B cell (primary cell): ENCODE measurements at regions of chr22 and their contacts with region 1.

Region 1: GRCh38 chr22:43587565-43587964 is 175.8 kb downstream of the MPPED1 start:
- DNase-seq: no peak
- ATAC-seq: no peak
- H3K4me3 ChIP-seq: no peak overlapping the region
- H3K4me3 Mint-ChIP-seq: no peak overlapping the region
- H3K27ac ChIP-seq: no peak overlapping the region
- H3K27ac Mint-ChIP-seq: no peak overlapping the region
- H3K4me1 ChIP-seq: no peaks in the 10 kb centered on the region
- H3K4me1 Mint-ChIP-seq: no peaks in the 10 kb centered on the region
- H3K27me3 ChIP-seq: no peaks in the 10 kb centered on the region
- H3K27me3 Mint-ChIP-seq: peaks cover 38% of the 10 kb centered on the region
- CTCF ChIP-seq: no peak

Region 2: GRCh38 chr22:43476341-43476740 is 111.2 kb before region 1 on chr22:
- CTCF ChIA-PET with region 1: no interaction called
- POLR2A ChIA-PET with region 1: no interaction called
- intact Hi-C with region 1: no loop called
- DNase-seq: no peak
- ATAC-seq: no peak
- H3K4me3 ChIP-seq: no peak overlapping the region
- H3K4me3 Mint-ChIP-seq: no peak overlapping the region
- H3K27ac ChIP-seq: no peak overlapping the region
- H3K27ac Mint-ChIP-seq: no peak overlapping the region
- H3K4me1 ChIP-seq: peaks cover 7 to 17% of the 10 kb centered on the region in 2 donors
- H3K4me1 Mint-ChIP-seq: peaks cover 17% of the 10 kb centered on the region
- H3K27me3 ChIP-seq: peaks cover 0 to 14% (median 1%) of the 10 kb centered on the region in 4 experiments
- H3K27me3 Mint-ChIP-seq: peaks cover 16% of the 10 kb centered on the region
- CTCF ChIP-seq: no peak

Region 3: GRCh38 chr22:43570531-43571165 is 16.9 kb before region 1 on chr22:
- CTCF ChIA-PET with region 1: no interaction called
- POLR2A ChIA-PET with region 1: no interaction called
- intact Hi-C with region 1: no loop called
- DNase-seq: no peak
- ATAC-seq: no peak
- H3K4me3 ChIP-seq: no peak overlapping the region
- H3K4me3 Mint-ChIP-seq: no peak overlapping the region
- H3K27ac ChIP-seq: no peak overlapping the region
- H3K27ac Mint-ChIP-seq: no peak overlapping the region
- H3K4me1 ChIP-seq: no peaks in the 10 kb centered on the region
- H3K4me1 Mint-ChIP-seq: no peaks in the 10 kb centered on the region
- H3K27me3 ChIP-seq: peaks cover 0 to 3% (median 0%) of the 10 kb centered on the region in 4 experiments
- H3K27me3 Mint-ChIP-seq: peaks cover 11% of the 10 kb centered on the region
- CTCF ChIP-seq: no peak

Region 4: GRCh38 chr22:43666457-43666856 is 78.9 kb after region 1 on chr22:
- CTCF ChIA-PET with region 1: no interaction called
- POLR2A ChIA-PET with region 1: interaction called, 15 read pairs
- intact Hi-C with region 1: no loop called
- DNase-seq: no peak
- ATAC-seq: no peak
- H3K4me3 ChIP-seq: no peak overlapping the region
- H3K4me3 Mint-ChIP-seq: no peak overlapping the region
- H3K27ac ChIP-seq: no peak overlapping the region
- H3K27ac Mint-ChIP-seq: no peak overlapping the region
- H3K4me1 ChIP-seq: no peaks in the 10 kb centered on the region
- H3K4me1 Mint-ChIP-seq: no peaks in the 10 kb centered on the region
- H3K27me3 ChIP-seq: no peaks in the 10 kb centered on the region
- H3K27me3 Mint-ChIP-seq: peaks cover 21% of the 10 kb centered on the region
- CTCF ChIP-seq: no peak

Region 5: GRCh38 chr22:43681731-43682360 is 94.3 kb after region 1 on chr22:
- CTCF ChIA-PET with region 1: no interaction called
- POLR2A ChIA-PET with region 1: no interaction called
- intact Hi-C with region 1: no loop called
- DNase-seq: no peak
- ATAC-seq: no peak
- H3K4me3 ChIP-seq: no peak overlapping the region
- H3K4me3 Mint-ChIP-seq: no peak overlapping the region
- H3K27ac ChIP-seq: no peak overlapping the region
- H3K27ac Mint-ChIP-seq: no peak overlapping the region
- H3K4me1 ChIP-seq: no peaks in the 10 kb centered on the region
- H3K4me1 Mint-ChIP-seq: no peaks in the 10 kb centered on the region
- H3K27me3 ChIP-seq: no peaks in the 10 kb centered on the region
- H3K27me3 Mint-ChIP-seq: peaks cover 9% of the 10 kb centered on the region
- CTCF ChIP-seq: no peak

Region 6: DNA sequence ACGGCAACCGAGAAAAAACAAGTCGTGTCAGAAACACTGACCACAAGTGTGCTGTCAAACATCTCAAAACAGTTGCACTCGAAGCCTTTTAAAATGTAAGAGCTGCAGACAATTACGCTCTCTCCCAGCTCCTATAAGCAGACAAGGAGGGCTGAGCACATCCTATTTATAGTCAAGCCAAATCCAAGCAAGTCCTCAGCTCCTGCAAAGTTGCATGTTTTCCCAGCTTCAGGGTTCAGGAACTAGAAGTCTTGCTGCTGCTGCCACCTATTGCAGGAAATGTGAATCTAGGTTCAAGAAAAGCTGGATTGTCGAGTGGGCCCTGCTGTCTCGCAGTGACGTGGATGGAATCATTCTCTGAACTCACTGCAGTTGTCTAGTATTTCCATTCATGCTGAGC is 209.0 kb after region 1 on chr22:
- CTCF ChIA-PET with region 1: no interaction called
- POLR2A ChIA-PET with region 1: no interaction called
- intact Hi-C with region 1: no loop called
- DNase-seq: no peak
- ATAC-seq: no peak
- H3K4me3 ChIP-seq: no peak overlapping the region
- H3K4me3 Mint-ChIP-seq: no peak overlapping the region
- H3K27ac ChIP-seq: no peak overlapping the region
- H3K27ac Mint-ChIP-seq: no peak overlapping the region
- H3K4me1 ChIP-seq: peaks cover 4 to 6% of the 10 kb centered on the region in 2 donors
- H3K4me1 Mint-ChIP-seq: peaks cover 5% of the 10 kb centered on the region
- H3K27me3 ChIP-seq: peaks cover 0 to 10% (median 6%) of the 10 kb centered on the region in 4 experiments
- H3K27me3 Mint-ChIP-seq: peaks cover 22% of the 10 kb centered on the region
- CTCF ChIP-seq: no peak